PC-3 (cell line): ENCODE measurements at regions of chr20 and their contacts with region 1.

Region 1: DNA sequence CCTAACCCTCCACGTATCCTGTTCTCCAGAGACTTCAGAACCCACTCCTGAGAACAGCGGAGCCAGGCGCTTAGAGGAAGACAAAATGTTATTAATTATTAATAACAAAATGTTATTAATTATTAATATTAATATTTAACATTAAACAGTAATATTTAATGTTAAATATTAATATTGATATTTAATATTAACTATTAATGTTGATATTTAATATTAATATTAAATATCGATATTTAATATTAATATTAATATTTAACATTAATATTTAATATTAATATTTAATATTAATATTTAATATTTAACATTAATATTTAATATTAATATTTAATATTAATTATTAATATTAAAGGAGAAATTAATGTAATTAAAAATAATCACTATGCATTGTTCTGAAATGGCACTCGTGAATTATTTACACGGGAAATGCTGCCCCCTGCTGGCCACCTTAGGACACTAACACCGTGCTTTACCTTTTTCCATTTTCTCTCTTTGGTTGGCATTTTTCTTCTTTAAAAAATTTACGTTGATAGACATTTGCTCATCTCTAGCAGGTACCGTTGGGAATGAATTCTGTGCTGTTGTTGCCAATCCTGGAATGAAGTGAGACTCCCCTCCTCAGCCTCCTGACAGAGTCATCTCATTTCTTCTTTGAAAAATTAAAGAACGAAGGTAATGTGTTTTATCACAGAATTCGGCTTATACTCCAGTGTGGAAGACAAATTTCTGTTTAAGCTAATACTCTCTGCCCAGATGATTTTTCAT is 7.5 kb upstream of the GGTLC1 start:
- DNase-seq: peak; percentile 60
- ATAC-seq: no peak
- H3K4me3 ChIP-seq: no peak overlapping the region
- H3K27ac ChIP-seq: no peak overlapping the region
- H3K4me1 ChIP-seq: no peaks in the 10 kb centered on the region
- H3K27me3 ChIP-seq: 0 out of 2 replicates have a peak, but pooled peaks cover 3% of the 10 kb centered on the region
- CTCF ChIP-seq: peak; percentile 73

Region 2: GRCh38 chr20:23668477-23668951 is 327.6 kb before region 1 on chr20:
- CTCF ChIA-PET with region 1: no interaction called
- POLR2A ChIA-PET with region 1: no interaction called
- intact Hi-C with region 1: loop called (anchors 2 kb)
- DNase-seq: peak; percentile 83
- ATAC-seq: peak; percentile 92
- H3K4me3 ChIP-seq: no peak overlapping the region
- H3K27ac ChIP-seq: no peak overlapping the region
- H3K4me1 ChIP-seq: no peaks in the 10 kb centered on the region
- H3K27me3 ChIP-seq: 0 out of 2 replicates have a peak, but pooled peaks cover 4% of the 10 kb centered on the region
- CTCF ChIP-seq: peak; percentile 94